Colonic mucosa (tissue), 4 donors: ENCODE measurements at regions of chr5 and their contacts with region 1.

Region 1: DNA sequence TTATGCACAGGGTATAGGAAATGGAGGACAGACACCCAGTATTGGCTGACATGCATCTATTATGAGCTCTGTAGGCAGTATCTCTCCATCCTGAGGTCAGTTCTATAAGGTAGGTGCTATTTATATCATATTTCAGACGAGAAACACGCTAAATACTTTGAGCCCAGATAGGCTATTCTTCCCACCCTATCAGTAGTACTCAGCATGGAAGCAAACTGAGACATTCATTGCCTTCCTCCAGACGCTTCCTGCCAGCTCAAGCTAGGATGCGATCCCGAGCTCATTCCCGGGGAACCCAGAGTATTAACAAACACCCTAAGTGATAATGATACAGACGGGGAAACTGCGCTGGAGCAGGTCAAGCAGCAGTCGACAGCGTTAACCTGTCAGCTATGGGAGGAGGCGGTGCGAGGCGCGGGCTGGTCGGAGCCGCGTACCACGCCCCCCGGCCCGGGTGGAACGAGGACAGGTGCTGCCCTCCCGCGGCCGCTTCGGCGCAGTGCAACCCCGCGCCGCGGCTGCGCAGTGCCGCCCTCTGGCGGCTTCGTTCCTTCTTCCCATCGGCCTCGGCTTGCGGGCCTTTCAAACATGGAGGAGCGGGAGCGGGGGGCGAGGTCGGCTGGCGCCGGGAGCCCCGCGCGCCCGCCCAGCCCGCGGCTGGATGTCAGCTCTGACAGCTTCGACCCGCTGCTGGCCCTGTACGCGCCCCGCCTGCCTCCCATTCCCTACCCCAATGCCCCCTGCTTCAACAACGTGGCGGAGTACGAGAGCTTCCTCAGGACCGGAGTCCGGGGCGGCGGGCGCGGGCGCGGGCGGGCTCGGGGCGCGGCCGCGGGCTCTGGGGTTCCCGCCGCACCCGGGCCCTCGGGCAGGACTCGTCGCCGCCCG is at the start of gene LSM11:
- DNase-seq: peak; percentile 90
- H3K4me3 ChIP-seq: peak within 1 kb of the TSS; percentile 77
- H3K27ac ChIP-seq: no peak within 1 kb of the TSS
- H3K4me1 ChIP-seq: peaks cover 5% of the 10 kb centered on the region
- H3K27me3 ChIP-seq: no peaks in the 10 kb centered on the region
- CTCF ChIP-seq: peak; percentile 99
- total RNA-seq, gene LSM11: 5.1 to 6.6 TPM

Region 2: DNA sequence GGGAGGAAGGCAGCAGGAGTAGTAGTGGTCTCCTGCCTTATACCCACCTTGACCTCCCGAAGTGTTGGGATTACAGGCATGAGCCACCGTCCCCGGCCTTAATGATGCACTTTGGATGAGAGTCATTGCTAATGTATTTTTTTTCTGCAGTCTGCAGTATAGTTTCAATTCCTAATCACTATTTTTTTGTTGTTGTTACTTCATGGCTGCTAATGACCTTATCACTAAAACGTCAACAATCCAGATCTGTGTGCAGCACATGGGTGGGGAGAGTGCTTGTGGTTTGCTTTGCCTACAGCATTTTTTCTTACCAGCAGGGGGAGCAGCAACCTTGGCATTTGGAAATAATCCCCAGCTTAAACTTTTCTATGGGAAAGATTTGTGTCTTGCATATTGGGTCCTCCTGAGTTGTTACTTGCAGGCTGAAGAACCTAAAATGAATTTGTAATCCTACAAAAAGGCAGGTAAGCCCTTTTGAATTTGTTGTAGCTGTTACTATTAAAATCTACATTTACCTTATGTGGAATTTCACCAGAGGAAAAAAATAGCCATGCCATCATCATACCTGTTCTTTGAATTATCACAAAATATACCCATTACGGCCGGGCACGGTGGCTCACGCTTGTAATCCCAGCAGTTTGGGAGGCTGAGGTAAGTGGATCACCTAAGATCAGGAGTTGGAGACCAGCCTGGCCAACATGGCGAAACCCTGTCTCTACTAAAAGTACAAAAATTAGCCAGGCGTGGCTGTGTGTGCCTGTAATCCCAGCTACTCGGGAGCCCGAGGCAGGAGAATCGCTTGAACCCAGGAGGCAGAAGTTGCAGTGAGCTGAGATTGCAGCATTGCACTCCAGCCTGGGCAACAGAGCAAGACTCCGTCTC is 594.4 kb before region 1 on chr5:
- intact Hi-C with region 1: loop called (anchors 5 kb)
- DNase-seq: peak; percentile 84
- H3K4me3 ChIP-seq: no peak overlapping the region
- H3K27ac ChIP-seq: no peak overlapping the region
- H3K4me1 ChIP-seq: no peaks in the 10 kb centered on the region
- H3K27me3 ChIP-seq: no peaks in the 10 kb centered on the region
- CTCF ChIP-seq: peak; percentile 81

Region 3: DNA sequence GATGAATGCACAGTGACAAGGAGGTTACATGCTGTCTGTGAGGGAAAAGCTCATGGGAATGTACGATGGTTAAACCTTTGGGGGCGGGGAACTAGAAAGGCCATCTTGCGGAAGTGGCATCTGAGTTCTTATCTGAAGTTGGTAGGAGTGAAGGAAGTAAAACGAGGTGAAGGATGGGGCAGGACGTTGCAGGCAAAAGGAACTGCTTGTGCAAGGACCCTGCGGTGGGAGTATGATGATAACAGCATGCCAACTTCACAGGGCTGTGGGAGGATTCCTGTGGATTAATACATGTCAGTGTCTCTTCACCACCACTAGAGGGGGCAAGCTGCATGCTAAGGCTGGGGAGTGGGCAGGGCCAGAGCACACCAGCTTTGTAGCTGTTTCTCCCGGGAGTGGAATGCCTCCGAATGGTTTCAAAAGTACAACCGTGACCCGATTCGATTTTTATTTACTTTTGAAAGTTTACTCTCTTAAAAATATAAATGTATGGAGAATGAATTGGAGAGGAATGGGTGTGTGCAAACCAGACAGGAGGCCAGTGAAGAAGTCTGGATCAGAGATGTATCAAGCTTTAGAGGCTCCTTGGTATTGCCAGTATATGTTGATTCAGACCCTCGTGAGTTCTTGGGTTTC is 415.0 kb before region 1 on chr5:
- intact Hi-C with region 1: loop called (anchors 10 kb)
- DNase-seq: peak; percentile 49
- H3K4me3 ChIP-seq: no peak overlapping the region
- H3K27ac ChIP-seq: no peak overlapping the region
- H3K4me1 ChIP-seq: no peaks in the 10 kb centered on the region
- H3K27me3 ChIP-seq: no peaks in the 10 kb centered on the region
- CTCF ChIP-seq: peak; percentile 88

Region 4: GRCh38 chr5:157366741-157367674 is 376.4 kb before region 1 on chr5:
- intact Hi-C with region 1: loop called (anchors 10 kb)
- DNase-seq: no peak
- H3K4me3 ChIP-seq: no peak overlapping the region
- H3K27ac ChIP-seq: no peak overlapping the region
- H3K4me1 ChIP-seq: no peaks in the 10 kb centered on the region
- H3K27me3 ChIP-seq: no peaks in the 10 kb centered on the region
- CTCF ChIP-seq: peak; percentile 23

Region 5: DNA sequence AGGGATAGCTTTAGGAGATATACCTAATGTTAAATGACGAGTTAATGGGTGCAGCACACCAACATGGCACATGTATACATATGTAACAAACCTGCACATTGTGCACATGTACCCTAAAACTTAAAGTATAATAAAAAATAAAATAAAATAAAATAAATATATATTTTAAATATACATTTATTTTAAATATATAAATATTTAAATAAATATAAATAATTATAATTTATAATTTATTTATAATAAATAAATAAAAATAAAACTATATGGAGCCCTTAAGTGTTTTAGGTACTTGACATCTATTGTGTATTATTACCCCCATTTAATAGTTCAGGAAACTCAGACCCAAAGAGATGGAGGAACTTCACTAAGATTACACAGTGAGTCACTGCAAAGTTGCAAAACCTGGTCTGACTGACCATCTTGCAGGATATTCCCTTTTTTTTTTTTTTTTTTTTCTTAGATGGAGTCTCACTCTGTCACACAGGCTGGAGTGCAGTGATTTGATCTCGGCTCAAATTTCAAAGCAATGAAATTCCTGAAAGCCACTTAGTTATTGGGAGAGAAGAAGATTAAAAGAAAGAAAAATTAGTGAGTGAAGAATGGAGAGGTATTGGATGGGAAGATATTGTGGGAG is 77.8 kb before region 1 on chr5:
- intact Hi-C with region 1: loop called (anchors 5 kb)
- DNase-seq: no peak
- H3K4me3 ChIP-seq: no peak overlapping the region
- H3K27ac ChIP-seq: no peak overlapping the region
- H3K4me1 ChIP-seq: peaks cover 6% of the 10 kb centered on the region
- H3K27me3 ChIP-seq: no peaks in the 10 kb centered on the region
- CTCF ChIP-seq: no peak

Region 6: DNA sequence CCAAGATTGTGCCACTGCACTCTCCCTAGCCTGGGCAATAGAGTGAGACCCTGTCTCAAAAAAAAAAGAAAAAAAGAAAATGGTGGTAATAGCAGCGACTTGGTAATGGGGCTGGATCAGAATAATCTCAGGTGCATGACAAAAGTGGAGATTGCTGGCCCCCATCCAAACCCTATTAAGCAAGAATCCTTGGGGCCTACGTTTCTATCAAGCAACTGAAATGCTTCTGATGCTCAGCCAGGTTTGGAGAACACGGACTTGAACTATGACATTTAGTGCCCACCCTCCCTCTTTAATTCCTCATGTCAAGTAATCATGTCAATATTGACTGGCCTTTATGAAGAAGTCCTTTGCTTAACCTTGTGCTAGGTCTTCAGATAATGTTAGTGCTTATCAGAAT is 65.5 kb before region 1 on chr5:
- intact Hi-C with region 1: no loop called
- DNase-seq: no peak
- H3K4me3 ChIP-seq: no peak overlapping the region
- H3K27ac ChIP-seq: no peak overlapping the region
- H3K4me1 ChIP-seq: no peaks in the 10 kb centered on the region
- H3K27me3 ChIP-seq: no peaks in the 10 kb centered on the region
- CTCF ChIP-seq: no peak

Region 7: GRCh38 chr5:157778121-157778805 is 34.9 kb after region 1 on chr5:
- intact Hi-C with region 1: no loop called
- DNase-seq: peak; percentile 78
- H3K4me3 ChIP-seq: no peak overlapping the region
- H3K27ac ChIP-seq: no peak overlapping the region
- H3K4me1 ChIP-seq: no peaks in the 10 kb centered on the region
- H3K27me3 ChIP-seq: no peaks in the 10 kb centered on the region
- CTCF ChIP-seq: no peak